PC-3 (cell line): ENCODE measurements at regions of chr17 and their contacts with region 1.

Region 1: GRCh38 chr17:47776330-47777197 is 43.5 kb downstream of the TBX21 start:
- DNase-seq: peak; percentile 75
- ATAC-seq: peak; percentile 97
- H3K4me3 ChIP-seq: no peak overlapping the region
- H3K27ac ChIP-seq: no peak overlapping the region
- H3K4me1 ChIP-seq: no peaks in the 10 kb centered on the region
- H3K27me3 ChIP-seq: peaks cover 46% of the 10 kb centered on the region
- CTCF ChIP-seq: peak; percentile 90

Region 2: GRCh38 chr17:47757386-47757785 is 19.2 kb before region 1 on chr17:
- CTCF ChIA-PET with region 1: no interaction called
- POLR2A ChIA-PET with region 1: interaction called, 35 read pairs
- intact Hi-C with region 1: no loop called
- DNase-seq: no peak
- ATAC-seq: no peak
- H3K4me3 ChIP-seq: no peak overlapping the region
- H3K27ac ChIP-seq: no peak overlapping the region
- H3K4me1 ChIP-seq: no peaks in the 10 kb centered on the region
- H3K27me3 ChIP-seq: peaks cover 41% of the 10 kb centered on the region
- CTCF ChIP-seq: no peak

Region 3: DNA sequence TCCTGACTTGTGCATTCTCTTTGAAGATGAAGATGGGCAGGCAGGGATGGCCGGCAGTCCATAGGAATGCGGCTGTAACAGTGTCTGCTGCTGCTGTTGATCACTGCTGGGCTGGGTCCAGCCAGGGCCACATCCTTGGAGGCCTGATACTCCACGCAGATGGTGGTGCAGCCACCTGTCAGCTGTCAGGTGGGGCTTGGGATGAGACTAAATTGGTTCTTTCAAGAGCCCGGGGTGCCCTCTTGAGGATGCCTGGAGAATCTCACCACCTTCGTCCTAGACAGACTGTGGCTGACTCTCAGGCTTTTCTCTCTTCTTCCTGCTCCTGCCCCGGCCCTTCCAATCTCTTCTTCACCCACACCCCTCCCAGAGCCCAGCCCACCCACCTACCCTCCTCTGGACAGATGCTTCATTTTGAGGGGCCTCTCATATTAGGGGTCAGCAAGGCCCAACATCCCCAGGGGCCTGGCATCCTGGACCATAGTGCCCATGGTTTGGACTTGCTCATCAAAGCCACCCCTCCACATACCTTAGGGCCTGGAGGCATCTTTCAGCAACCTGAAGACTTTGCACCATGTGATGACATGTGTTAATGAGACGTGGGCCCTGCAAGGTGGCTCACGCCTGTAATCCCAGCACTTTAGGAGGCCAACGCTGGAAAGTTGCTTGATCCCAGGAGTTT is 25.9 kb after region 1 on chr17:
- CTCF ChIA-PET with region 1: no interaction called
- POLR2A ChIA-PET with region 1: no interaction called
- intact Hi-C with region 1: loop called (anchors 1 kb)
- DNase-seq: peak; percentile 80
- ATAC-seq: peak; percentile 97
- H3K4me3 ChIP-seq: no peak overlapping the region
- H3K27ac ChIP-seq: no peak overlapping the region
- H3K4me1 ChIP-seq: no peaks in the 10 kb centered on the region
- H3K27me3 ChIP-seq: no peaks in the 10 kb centered on the region
- CTCF ChIP-seq: peak; percentile 87

Region 4: GRCh38 chr17:47831003-47831933 is 54.7 kb after region 1 on chr17 and contains the starts of genes LRRC46 and MRPL10:
- CTCF ChIA-PET with region 1: no interaction called
- POLR2A ChIA-PET with region 1: no interaction called
- intact Hi-C with region 1: loop called (anchors 2 kb)
- DNase-seq: peak; percentile 96
- ATAC-seq: peak; percentile 90
- H3K4me3 ChIP-seq: peak within 1 kb of the TSS; percentile 71
- H3K27ac ChIP-seq: peak within 1 kb of the TSS; percentile 11
- H3K4me1 ChIP-seq: peaks cover 17% of the 10 kb centered on the region
- H3K27me3 ChIP-seq: no peaks in the 10 kb centered on the region
- CTCF ChIP-seq: peak; percentile 86
- total RNA-seq, gene LRRC46: 0.44 and 1.2 TPM in 2 replicates
- total RNA-seq, gene MRPL10: 54.5 and 74.2 TPM in 2 replicates